HCT116 (cell line): ENCODE measurements at regions of chr6 and their contacts with region 1.

Region 1: GRCh38 chr6:137676888-137677287 is 182.7 kb upstream of the OLIG3 start:
- DNase-seq: no peak
- ATAC-seq: no peak
- H3K4me3 ChIP-seq: no peak overlapping the region
- H3K27ac ChIP-seq: no peak overlapping the region
- H3K4me1 ChIP-seq: peaks cover 10 to 14% of the 10 kb centered on the region in 2 experiments
- H3K27me3 ChIP-seq: no peaks in the 10 kb centered on the region
- CTCF ChIP-seq: no peak
- POLR2A ChIP-seq: no peak
- RAD21 ChIP-seq: no peak

Region 2: GRCh38 chr6:136501514-136501913 is 1175.4 kb before region 1 on chr6:
- CTCF ChIA-PET with region 1: no interaction called
- POLR2A ChIA-PET with region 1: no interaction called
- RAD21 ChIA-PET with region 1: no interaction called
- intact Hi-C with region 1: no loop called
- DNase-seq: no peak
- ATAC-seq: no peak
- H3K4me3 ChIP-seq: no peak overlapping the region
- H3K27ac ChIP-seq: no peak overlapping the region
- H3K4me1 ChIP-seq: no peaks in the 10 kb centered on the region
- H3K27me3 ChIP-seq: no peaks in the 10 kb centered on the region
- CTCF ChIP-seq: no peak
- POLR2A ChIP-seq: no peak
- RAD21 ChIP-seq: no peak

Region 3: GRCh38 chr6:137666202-137666774 is 10.6 kb before region 1 on chr6:
- CTCF ChIA-PET with region 1: no interaction called
- POLR2A ChIA-PET with region 1: no interaction called
- RAD21 ChIA-PET with region 1: no interaction called
- intact Hi-C with region 1: loop called (anchors 1 kb)
- DNase-seq: no peak
- ATAC-seq: no peak
- H3K4me3 ChIP-seq: no peak overlapping the region
- H3K27ac ChIP-seq: no peak overlapping the region
- H3K4me1 ChIP-seq: no peaks in the 10 kb centered on the region
- H3K27me3 ChIP-seq: no peaks in the 10 kb centered on the region
- CTCF ChIP-seq: no peak
- POLR2A ChIP-seq: no peak
- RAD21 ChIP-seq: no peak